Dorsolateral prefrontal cortex (tissue), 120 donors: ENCODE measurements at regions of chr19 and their contacts with region 1.

Region 1: GRCh38 chr19:19488875-19489690 is 26.3 kb downstream of the TSSK6 start:
- DNase-seq: peak in 7 of 10 donors; percentile 35 to 78 (median 57)
- H3K4me3 ChIP-seq: peak overlapping the region in 39 of 59 donors; percentile 1 to 54 (median 24)
- H3K27ac ChIP-seq: peak overlapping the region; percentile 19 to 94 (median 79)
- H3K27me3 ChIP-seq: no peaks in the 10 kb centered on the region
- CTCF ChIP-seq: peak in 3 of 56 donors; percentile 12 to 20 (median 13)

Region 2: GRCh38 chr19:19053508-19054314 is 435.4 kb before region 1 on chr19:
- intact Hi-C with region 1: loop called in 1 of 2 experiments (anchors 10 kb)
- DNase-seq: peak in 8 of 10 donors; percentile 36 to 76 (median 60)
- H3K4me3 ChIP-seq: no peak overlapping the region
- H3K27ac ChIP-seq: no peak overlapping the region
- H3K27me3 ChIP-seq: no peaks in the 10 kb centered on the region
- CTCF ChIP-seq: peak; percentile 26 to 82 (median 71)

Region 3: GRCh38 chr19:19145684-19146608 is 343.1 kb before region 1 on chr19:
- intact Hi-C with region 1: loop called in 1 of 2 experiments (anchors 2 kb)
- DNase-seq: peak; percentile 66 to 83 (median 76)
- H3K4me3 ChIP-seq: peak overlapping the region in 37 of 59 donors; percentile 3 to 55 (median 32)
- H3K27ac ChIP-seq: peak overlapping the region in 5 of 59 donors; percentile 22 to 55 (median 48)
- H3K27me3 ChIP-seq: no peaks in the 10 kb centered on the region
- CTCF ChIP-seq: peak; percentile 69 to 96 (median 87)

Region 4: GRCh38 chr19:19170053-19170872 is 318.8 kb before region 1 on chr19 and contains the start of gene MEF2B:
- intact Hi-C with region 1: loop called in 1 of 2 experiments (anchors 10 kb)
- DNase-seq: peak in 8 of 10 donors; percentile 27 to 71 (median 54)
- H3K4me3 ChIP-seq: peak within 1 kb of the TSS in 58 of 59 donors; percentile 3 to 66 (median 42)
- H3K27ac ChIP-seq: no peak within 1 kb of the TSS
- H3K27me3 ChIP-seq: no peaks in the 10 kb centered on the region
- CTCF ChIP-seq: no peak
- total RNA-seq, gene MEF2B: 0.33 to 5.3 (median 1.9) TPM in 110 of 120 experiments, not detected in the others

Region 5: DNA sequence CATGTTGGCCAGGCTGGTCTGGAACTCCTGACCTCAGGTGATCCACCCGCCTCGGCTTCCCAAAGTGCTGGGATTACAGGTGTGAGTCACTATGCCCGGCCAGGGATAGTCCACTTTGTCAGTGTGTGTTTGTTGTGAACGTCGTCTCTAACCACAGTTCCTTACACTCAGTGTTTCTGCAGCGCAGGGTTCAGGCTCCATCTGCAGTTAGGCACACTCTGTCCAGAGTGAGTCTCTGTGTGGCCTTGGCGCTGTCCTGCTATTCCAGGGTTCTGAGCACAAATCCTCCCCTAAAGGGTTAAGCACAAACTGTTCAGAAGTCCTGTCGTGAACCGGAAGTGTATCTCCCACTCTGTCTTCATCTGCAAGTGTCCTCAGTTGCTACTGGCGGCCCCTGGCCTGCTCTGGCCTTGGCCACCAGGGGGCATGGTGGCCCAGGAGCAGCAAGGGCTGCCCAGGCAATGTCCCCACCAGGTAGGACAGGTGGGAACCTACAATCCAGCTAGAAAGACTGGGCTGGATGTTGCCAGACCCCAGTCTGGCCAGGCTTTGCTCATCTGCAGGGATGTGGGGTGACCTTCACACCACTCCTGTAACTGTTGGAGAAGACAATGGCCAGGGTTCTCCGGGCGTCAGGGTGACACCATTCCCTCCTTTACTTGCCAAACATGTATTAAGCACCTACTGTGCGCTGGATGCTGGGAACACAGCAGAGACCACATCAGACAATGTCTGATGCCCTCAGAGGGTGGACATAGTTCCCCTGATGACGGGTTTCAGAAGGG is 122.3 kb before region 1 on chr19:
- intact Hi-C with region 1: loop called (anchors 2 to 5 kb)
- DNase-seq: peak in 6 of 10 donors; percentile 35 to 67 (median 42)
- H3K4me3 ChIP-seq: no peak overlapping the region
- H3K27ac ChIP-seq: no peak overlapping the region
- H3K27me3 ChIP-seq: no peaks in the 10 kb centered on the region
- CTCF ChIP-seq: peak; percentile 60 to 92 (median 83)

Region 6: DNA sequence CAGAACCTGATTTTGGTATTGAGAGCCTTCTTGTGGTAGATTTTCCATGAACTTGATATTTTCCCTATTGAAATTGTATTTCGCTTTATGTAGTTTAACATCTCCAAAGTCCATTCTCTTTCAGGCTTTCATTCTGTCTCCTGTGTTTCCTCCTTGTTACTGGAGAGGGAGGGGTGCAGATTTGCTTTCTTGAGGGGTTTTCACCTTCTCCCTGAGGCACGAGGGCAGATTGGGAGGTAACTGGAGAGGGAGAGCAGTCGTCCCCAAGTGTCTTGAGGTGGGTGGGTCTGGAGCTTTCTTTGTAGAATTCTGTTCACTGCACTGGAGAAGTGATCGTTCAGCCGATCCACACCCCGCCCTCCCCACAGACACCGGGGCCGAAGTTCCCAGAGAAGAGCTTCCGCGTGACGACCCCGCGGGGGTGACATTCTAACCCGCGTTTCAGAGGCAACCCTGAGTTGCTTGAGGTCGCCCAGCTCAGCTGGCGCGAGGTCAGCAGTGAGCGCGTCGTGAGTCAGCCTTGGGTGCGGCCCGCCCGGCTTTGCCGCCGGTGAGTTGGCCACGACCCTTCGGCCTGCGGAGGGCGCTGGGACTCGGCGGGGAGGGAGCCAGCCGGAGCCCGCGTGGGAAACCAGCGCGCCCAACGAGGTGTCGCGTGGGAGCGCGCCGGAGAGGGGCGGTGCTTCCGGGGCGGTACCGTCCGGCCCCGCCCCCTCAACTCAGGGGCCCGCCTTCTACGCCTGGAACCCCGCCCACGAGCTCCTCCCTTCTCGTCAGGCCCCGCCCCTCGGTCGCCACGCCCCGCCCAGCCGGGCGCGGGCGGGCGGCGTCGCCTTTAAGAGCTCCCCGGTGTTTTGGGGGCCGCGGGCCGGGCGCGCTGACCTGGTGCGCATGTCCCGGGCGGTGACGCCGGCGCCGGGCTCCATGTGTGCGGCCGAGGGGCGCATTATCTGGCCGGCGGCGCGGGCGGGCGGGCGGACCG is 83.9 kb before region 1 on chr19 and contains the start of gene GATAD2A:
- intact Hi-C with region 1: loop called in 1 of 2 experiments (anchors 5 kb)
- DNase-seq: peak; percentile 86 to 96 (median 93)
- H3K4me3 ChIP-seq: peak within 1 kb of the TSS; percentile 52 to 96 (median 82)
- H3K27ac ChIP-seq: peak within 1 kb of the TSS in 53 of 59 donors; percentile 20 to 89 (median 74)
- H3K27me3 ChIP-seq: no peaks in the 10 kb centered on the region
- CTCF ChIP-seq: peak in 53 of 56 donors; percentile 12 to 76 (median 53)
- total RNA-seq, gene GATAD2A: 27.7 to 72.8 (median 40.1) TPM

Region 7: GRCh38 chr19:19475015-19475765 is 13.9 kb before region 1 on chr19:
- intact Hi-C with region 1: no loop called
- DNase-seq: no peak
- H3K4me3 ChIP-seq: no peak overlapping the region
- H3K27ac ChIP-seq: peak overlapping the region in 1 of 59 donors; percentile 13
- H3K27me3 ChIP-seq: no peaks in the 10 kb centered on the region
- CTCF ChIP-seq: no peak

Region 8: GRCh38 chr19:19554074-19555023 is 65.3 kb after region 1 on chr19:
- intact Hi-C with region 1: no loop called
- DNase-seq: no peak
- H3K4me3 ChIP-seq: no peak overlapping the region
- H3K27ac ChIP-seq: no peak overlapping the region
- H3K27me3 ChIP-seq: peaks cover 0 to 4% (median 0%) of the 10 kb centered on the region in 45 donors
- CTCF ChIP-seq: peak in 54 of 56 donors; percentile 25 to 72 (median 61)